Activated B cell treated with CpG ODN at 0.5 μM for 24 hours (primary cell): ENCODE measurements at regions of chr2 and their contacts with region 1.

Region 1: GRCh38 chr2:60881047-60881932 is at the start of gene REL:
- DNase-seq: peak; percentile 88
- ATAC-seq: peak; percentile 73
- H3K4me3 Mint-ChIP-seq: peak within 1 kb of the TSS; percentile 98
- H3K27ac Mint-ChIP-seq: peak within 1 kb of the TSS; percentile 95
- H3K4me1 Mint-ChIP-seq: peaks cover 36% of the 10 kb centered on the region
- H3K27me3 Mint-ChIP-seq: no peaks in the 10 kb centered on the region
- CTCF ChIP-seq: no peak
- total RNA-seq, gene REL: 211 and 238 TPM in 2 replicates

Region 2: GRCh38 chr2:60818272-60818671 is 63.0 kb before region 1 on chr2:
- CTCF ChIA-PET with region 1: interaction called, 8 read pairs
- POLR2A ChIA-PET with region 1: interaction called, 47 read pairs
- intact Hi-C with region 1: loop called (anchors 1 kb)
- DNase-seq: no peak
- ATAC-seq: peak; percentile 72
- H3K4me3 Mint-ChIP-seq: peak overlapping the region; percentile 50
- H3K27ac Mint-ChIP-seq: peak overlapping the region; percentile 67
- H3K4me1 Mint-ChIP-seq: peaks cover 50% of the 10 kb centered on the region
- H3K27me3 Mint-ChIP-seq: no peaks in the 10 kb centered on the region
- CTCF ChIP-seq: no peak

Region 3: GRCh38 chr2:60867848-60868247 is 13.4 kb before region 1 on chr2:
- CTCF ChIA-PET with region 1: interaction called, 4 read pairs
- POLR2A ChIA-PET with region 1: interaction called, 104 read pairs
- intact Hi-C with region 1: loop called (anchors 1 kb)
- DNase-seq: no peak
- ATAC-seq: peak; percentile 87
- H3K4me3 Mint-ChIP-seq: peak overlapping the region; percentile 71
- H3K27ac Mint-ChIP-seq: peak overlapping the region; percentile 96
- H3K4me1 Mint-ChIP-seq: peaks cover 65% of the 10 kb centered on the region
- H3K27me3 Mint-ChIP-seq: no peaks in the 10 kb centered on the region
- CTCF ChIP-seq: no peak

Region 4: GRCh38 chr2:60972889-60973656 is 91.8 kb after region 1 on chr2:
- CTCF ChIA-PET with region 1: no interaction called
- POLR2A ChIA-PET with region 1: interaction called, 52 read pairs
- intact Hi-C with region 1: loop called (anchors 1 kb)
- DNase-seq: no peak
- ATAC-seq: no peak
- H3K4me3 Mint-ChIP-seq: peak overlapping the region; percentile 73
- H3K27ac Mint-ChIP-seq: peak overlapping the region; percentile 96
- H3K4me1 Mint-ChIP-seq: peaks cover 88% of the 10 kb centered on the region
- H3K27me3 Mint-ChIP-seq: no peaks in the 10 kb centered on the region
- CTCF ChIP-seq: no peak

Region 5: GRCh38 chr2:61176755-61177726 is 295.8 kb after region 1 on chr2:
- CTCF ChIA-PET with region 1: interaction called, 3 read pairs
- POLR2A ChIA-PET with region 1: interaction called, 3 read pairs
- intact Hi-C with region 1: loop called (anchors 1 kb)
- DNase-seq: peak; percentile 95
- ATAC-seq: peak; percentile 90
- H3K4me3 Mint-ChIP-seq: peak overlapping the region; percentile 94
- H3K27ac Mint-ChIP-seq: peak overlapping the region; percentile 94
- H3K4me1 Mint-ChIP-seq: peaks cover 48% of the 10 kb centered on the region
- H3K27me3 Mint-ChIP-seq: no peaks in the 10 kb centered on the region
- CTCF ChIP-seq: no peak